MCF 10A (cell line): ENCODE measurements at regions of chr10 and their contacts with region 1.

Region 1: GRCh38 chr10:99612167-99612831 is 7.9 kb downstream of the SLC25A28 start:
- DNase-seq: peak; percentile 73
- H3K4me3 Mint-ChIP-seq: no peak overlapping the region
- H3K27ac Mint-ChIP-seq: no peak overlapping the region
- H3K4me1 Mint-ChIP-seq: peaks cover 9% of the 10 kb centered on the region
- H3K27me3 Mint-ChIP-seq: no peaks in the 10 kb centered on the region
- CTCF ChIP-seq: peak; percentile 68

Region 2: GRCh38 chr10:99395750-99396445 is 216.4 kb before region 1 on chr10:
- CTCF ChIA-PET with region 1: interaction called, 60 read pairs
- POLR2A ChIA-PET with region 1: interaction called, 3 read pairs
- intact Hi-C with region 1: loop called (anchors 1 kb)
- DNase-seq: peak; percentile 49
- H3K4me3 Mint-ChIP-seq: no peak overlapping the region
- H3K27ac Mint-ChIP-seq: no peak overlapping the region
- H3K4me1 Mint-ChIP-seq: peaks cover 33% of the 10 kb centered on the region
- H3K27me3 Mint-ChIP-seq: no peaks in the 10 kb centered on the region
- CTCF ChIP-seq: no peak

Region 3: DNA sequence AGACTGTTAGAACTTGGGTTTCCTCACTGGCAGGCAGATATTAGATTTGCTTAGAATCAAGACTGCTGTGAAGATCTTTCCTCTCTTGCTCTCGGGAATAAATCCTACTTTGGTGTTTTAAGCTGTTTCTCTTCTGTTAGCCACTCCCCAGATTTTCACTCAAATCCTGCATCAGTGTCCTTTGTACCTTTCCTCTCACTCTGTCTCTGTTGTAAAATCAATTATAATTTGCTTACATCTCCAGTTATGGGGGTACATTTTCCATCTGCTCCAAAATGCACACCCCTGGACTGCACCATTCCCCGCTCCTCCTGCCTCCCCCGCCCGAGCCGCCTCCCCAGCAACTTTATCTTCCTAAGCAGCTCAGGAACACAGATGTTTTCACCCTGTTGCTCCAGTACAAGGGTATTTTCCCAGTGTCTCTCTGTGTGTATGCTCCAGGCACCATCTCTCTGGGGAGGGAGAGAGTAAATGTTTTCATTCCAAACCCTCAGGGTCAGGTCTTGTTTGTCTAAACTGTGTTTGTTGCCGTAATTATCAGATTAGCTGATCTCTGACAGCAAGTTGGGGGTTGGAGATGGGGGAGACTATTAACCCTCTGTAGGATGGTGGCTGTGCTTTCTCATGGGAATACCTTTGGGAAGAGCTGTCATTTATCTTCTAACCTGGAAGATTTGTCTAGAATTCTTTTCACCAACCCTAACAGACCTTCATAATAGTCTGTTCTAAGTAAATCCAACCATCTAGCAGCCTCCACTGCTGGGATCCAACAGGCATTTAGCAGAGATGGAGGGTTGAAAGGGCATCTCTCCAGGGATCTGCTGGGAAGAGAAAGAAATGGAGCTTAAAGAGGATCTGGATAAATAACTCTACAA is 161.4 kb before region 1 on chr10:
- CTCF ChIA-PET with region 1: interaction called, 10 read pairs
- POLR2A ChIA-PET with region 1: no interaction called
- intact Hi-C with region 1: no loop called
- DNase-seq: no peak
- H3K4me3 Mint-ChIP-seq: no peak overlapping the region
- H3K27ac Mint-ChIP-seq: no peak overlapping the region
- H3K4me1 Mint-ChIP-seq: no peaks in the 10 kb centered on the region
- H3K27me3 Mint-ChIP-seq: peaks cover 80% of the 10 kb centered on the region
- CTCF ChIP-seq: no peak

Region 4: GRCh38 chr10:99484603-99485581 is 127.4 kb before region 1 on chr10:
- CTCF ChIA-PET with region 1: interaction called, 36 read pairs
- POLR2A ChIA-PET with region 1: no interaction called
- intact Hi-C with region 1: loop called (anchors 1 kb)
- DNase-seq: peak; percentile 23
- H3K4me3 Mint-ChIP-seq: no peak overlapping the region
- H3K27ac Mint-ChIP-seq: no peak overlapping the region
- H3K4me1 Mint-ChIP-seq: no peaks in the 10 kb centered on the region
- H3K27me3 Mint-ChIP-seq: peaks cover 71% of the 10 kb centered on the region
- CTCF ChIP-seq: peak; percentile 26

Region 5: GRCh38 chr10:99560277-99561126 is 51.8 kb before region 1 on chr10:
- CTCF ChIA-PET with region 1: interaction called, 17 read pairs
- POLR2A ChIA-PET with region 1: interaction called, 4 read pairs
- intact Hi-C with region 1: loop called (anchors 1 kb)
- DNase-seq: peak; percentile 79
- H3K4me3 Mint-ChIP-seq: no peak overlapping the region
- H3K27ac Mint-ChIP-seq: no peak overlapping the region
- H3K4me1 Mint-ChIP-seq: no peaks in the 10 kb centered on the region
- H3K27me3 Mint-ChIP-seq: peaks cover under 1% of the 10 kb centered on the region
- CTCF ChIP-seq: peak; percentile 79

Region 6: GRCh38 chr10:99595770-99596465 is 16.4 kb before region 1 on chr10:
- CTCF ChIA-PET with region 1: interaction called, 20 read pairs
- POLR2A ChIA-PET with region 1: interaction called, 3 read pairs
- intact Hi-C with region 1: no loop called
- DNase-seq: no peak
- H3K4me3 Mint-ChIP-seq: no peak overlapping the region
- H3K27ac Mint-ChIP-seq: no peak overlapping the region
- H3K4me1 Mint-ChIP-seq: no peaks in the 10 kb centered on the region
- H3K27me3 Mint-ChIP-seq: no peaks in the 10 kb centered on the region
- CTCF ChIP-seq: no peak

Region 7: GRCh38 chr10:99630439-99630838 is 18.1 kb after region 1 on chr10:
- CTCF ChIA-PET with region 1: interaction called, 10 read pairs
- POLR2A ChIA-PET with region 1: interaction called, 4 read pairs
- intact Hi-C with region 1: no loop called
- DNase-seq: peak; percentile 73
- H3K4me3 Mint-ChIP-seq: no peak overlapping the region
- H3K27ac Mint-ChIP-seq: no peak overlapping the region
- H3K4me1 Mint-ChIP-seq: peaks cover 6% of the 10 kb centered on the region
- H3K27me3 Mint-ChIP-seq: no peaks in the 10 kb centered on the region
- CTCF ChIP-seq: peak; percentile 63

Region 8: GRCh38 chr10:100053686-100054460 is 441.6 kb after region 1 on chr10:
- CTCF ChIA-PET with region 1: no interaction called
- POLR2A ChIA-PET with region 1: no interaction called
- intact Hi-C with region 1: no loop called
- DNase-seq: no peak
- H3K4me3 Mint-ChIP-seq: no peak overlapping the region
- H3K27ac Mint-ChIP-seq: no peak overlapping the region
- H3K4me1 Mint-ChIP-seq: no peaks in the 10 kb centered on the region
- H3K27me3 Mint-ChIP-seq: no peaks in the 10 kb centered on the region
- CTCF ChIP-seq: no peak